CD8-positive, alpha-beta memory T cell (primary cell): ENCODE measurements at regions of chr16 and their contacts with region 1.

Region 1: DNA sequence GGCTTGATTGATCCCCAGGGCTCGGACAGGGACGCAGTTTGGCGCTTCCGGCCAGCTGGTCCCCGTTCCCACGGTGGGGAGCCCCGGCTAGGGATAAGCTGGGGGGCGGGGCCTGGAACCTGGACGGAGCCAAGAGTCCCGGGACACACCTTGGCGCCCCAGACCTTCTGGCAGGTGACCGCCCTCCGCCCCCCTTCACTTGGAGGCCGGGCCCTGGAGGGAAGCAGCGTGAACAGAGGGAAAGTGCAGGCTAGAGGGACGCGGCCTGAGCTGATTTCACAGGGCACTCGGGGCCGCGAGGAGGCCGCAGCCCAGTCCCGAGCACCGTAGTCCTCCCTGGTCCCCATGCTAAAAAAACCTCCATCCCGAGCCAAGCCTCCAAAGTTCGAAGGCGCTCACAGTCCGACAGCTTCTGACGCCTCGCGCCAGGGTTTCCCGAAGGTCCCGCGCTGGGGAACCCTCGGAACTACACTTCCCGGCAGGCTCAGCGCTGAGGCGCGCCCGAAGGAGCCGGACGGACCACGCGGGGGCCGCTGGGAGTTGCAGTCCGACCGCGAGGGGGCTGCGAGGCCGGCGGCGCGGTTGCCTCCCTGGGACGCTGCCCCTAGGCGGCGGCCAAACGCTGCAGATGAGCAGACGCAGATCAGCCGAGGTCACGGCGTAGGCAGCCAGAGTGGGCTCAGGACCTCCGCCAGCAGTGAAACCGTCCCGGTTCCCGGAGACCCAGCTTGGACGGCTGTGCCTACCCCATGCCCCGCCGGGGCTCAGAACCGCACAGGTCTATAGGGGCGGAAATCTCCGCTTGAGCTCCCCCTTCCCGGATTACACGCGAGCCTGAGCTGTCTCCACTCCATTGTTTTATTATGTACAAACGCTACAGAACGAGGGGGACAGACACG is at the start of gene TBX6:
- DNase-seq: peak; percentile 89 to 93 (median 90)
- H3K4me3 ChIP-seq: peak within 1 kb of the TSS; percentile 86
- H3K4me3 Mint-ChIP-seq: peak within 1 kb of the TSS; percentile 82 to 94 (median 90)
- H3K27ac ChIP-seq: peak within 1 kb of the TSS; percentile 90
- H3K27ac Mint-ChIP-seq: peak within 1 kb of the TSS; percentile 82 to 98 (median 97)
- H3K4me1 ChIP-seq: peaks cover 63% of the 10 kb centered on the region
- H3K4me1 Mint-ChIP-seq: peaks cover 38 to 50% (median 41%) of the 10 kb centered on the region in 3 donors
- H3K27me3 ChIP-seq: no peaks in the 10 kb centered on the region
- H3K27me3 Mint-ChIP-seq: no peaks in the 10 kb centered on the region
- total RNA-seq, gene TBX6: 0.71 to 0.83 TPM

Region 2: GRCh38 chr16:30075507-30076275 is 16.0 kb before region 1 on chr16 and contains the start of gene PPP4C:
- CTCF ChIA-PET with region 1: interaction called, 25 read pairs
- POLR2A ChIA-PET with region 1: interaction called, 8 read pairs
- DNase-seq: peak; percentile 90 to 93 (median 91)
- H3K4me3 ChIP-seq: peak within 1 kb of the TSS; percentile 67
- H3K4me3 Mint-ChIP-seq: peak within 1 kb of the TSS; percentile 89 to 97 (median 92)
- H3K27ac ChIP-seq: peak within 1 kb of the TSS; percentile 83
- H3K27ac Mint-ChIP-seq: peak within 1 kb of the TSS; percentile 92 to 98 (median 96)
- H3K4me1 ChIP-seq: peaks cover 32% of the 10 kb centered on the region
- H3K4me1 Mint-ChIP-seq: peaks cover 33 to 52% (median 50%) of the 10 kb centered on the region in 3 donors
- H3K27me3 ChIP-seq: no peaks in the 10 kb centered on the region
- H3K27me3 Mint-ChIP-seq: peaks cover 0 to 1% of the 10 kb centered on the region in 2 donors
- total RNA-seq, gene PPP4C: 137 to 149 TPM

Region 3: DNA sequence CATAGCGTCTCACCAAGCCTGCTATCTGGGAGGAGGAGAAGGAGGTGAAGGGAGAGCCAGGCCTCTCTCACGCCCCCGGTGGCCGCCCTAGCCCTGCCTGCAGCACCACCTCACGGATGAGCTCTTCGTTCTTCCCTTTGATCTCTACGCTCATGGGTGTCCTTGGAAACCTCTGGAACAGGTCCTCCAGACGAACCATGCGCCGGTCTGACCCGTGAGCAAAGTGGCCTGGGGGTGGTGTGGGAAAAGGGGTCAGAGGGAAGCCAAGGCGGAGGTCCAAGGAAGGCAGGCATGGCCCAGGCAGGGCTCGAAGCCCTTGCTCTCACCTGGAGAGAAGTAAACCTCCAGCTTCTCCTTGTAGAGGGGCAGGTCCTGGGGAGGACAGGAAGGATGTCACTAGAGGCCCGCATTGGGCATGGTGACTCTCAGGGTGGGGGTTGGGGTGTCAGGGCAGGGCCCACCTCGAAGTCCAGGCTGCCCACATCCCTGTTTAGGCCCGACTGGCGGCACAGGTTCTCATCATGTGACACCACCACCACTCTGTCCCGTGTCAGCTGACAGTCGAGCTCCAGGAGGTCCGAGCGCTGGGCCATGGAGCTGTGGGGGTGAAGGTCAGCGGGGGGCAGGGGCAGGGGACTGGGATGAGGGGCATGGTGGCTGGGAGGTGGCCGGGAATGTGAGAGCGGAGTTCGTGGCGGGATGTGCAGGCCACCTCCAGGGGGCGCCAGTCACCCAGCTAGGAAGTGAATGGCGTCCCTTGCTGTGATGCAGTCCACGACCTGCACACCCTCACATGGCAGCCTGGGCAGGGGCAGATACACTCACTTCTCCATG is 20.7 kb after region 1 on chr16:
- CTCF ChIA-PET with region 1: interaction called, 22 read pairs
- POLR2A ChIA-PET with region 1: interaction called, 5 read pairs
- DNase-seq: peak in 4 of 5 donors; percentile 25 to 65 (median 36)
- H3K4me3 ChIP-seq: no peak overlapping the region
- H3K4me3 Mint-ChIP-seq: no peak overlapping the region
- H3K27ac ChIP-seq: no peak overlapping the region
- H3K27ac Mint-ChIP-seq: no peak overlapping the region
- H3K4me1 ChIP-seq: peaks cover 19% of the 10 kb centered on the region
- H3K4me1 Mint-ChIP-seq: peaks cover 12 to 21% (median 12%) of the 10 kb centered on the region in 3 donors
- H3K27me3 ChIP-seq: no peaks in the 10 kb centered on the region
- H3K27me3 Mint-ChIP-seq: no peaks in the 10 kb centered on the region

Region 4: DNA sequence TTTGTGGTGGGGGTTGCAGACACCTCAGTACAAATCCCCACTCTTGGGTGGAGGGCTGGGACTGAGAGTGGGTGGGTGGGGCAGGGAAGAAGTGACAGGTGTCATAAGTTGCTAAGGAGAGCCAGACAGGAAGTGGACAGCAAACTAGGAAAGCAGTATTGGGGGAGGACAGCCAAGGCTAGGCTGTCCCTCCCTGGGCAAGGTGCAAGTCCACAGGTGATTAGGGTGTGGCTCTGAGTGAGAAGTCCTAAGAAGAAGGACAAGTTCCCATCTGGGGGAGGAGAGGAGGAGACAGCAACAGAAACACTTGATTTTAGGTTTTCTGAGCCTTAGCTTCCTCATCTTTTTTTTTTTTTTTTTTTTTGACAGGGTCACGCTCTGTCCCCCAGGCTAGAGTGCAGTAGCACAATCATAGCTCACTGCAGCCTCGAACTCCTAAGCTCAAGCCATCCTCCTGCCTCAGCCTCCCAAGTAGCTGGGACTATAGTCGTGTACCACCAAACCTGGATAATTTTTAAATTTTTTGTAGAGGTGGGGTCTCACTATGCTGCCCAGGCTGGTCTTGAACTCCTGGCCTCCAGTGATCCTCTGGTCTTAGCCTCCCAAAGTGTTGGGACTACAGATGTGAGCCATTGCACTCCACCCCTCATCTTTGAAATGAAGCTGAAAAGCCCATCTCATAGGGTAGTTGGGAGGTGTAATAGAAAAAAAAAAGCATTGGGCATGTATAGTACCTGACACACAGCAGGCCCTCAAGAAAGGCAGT is 28.8 kb after region 1 on chr16:
- CTCF ChIA-PET with region 1: interaction called, 10 read pairs
- POLR2A ChIA-PET with region 1: interaction called, 4 read pairs
- DNase-seq: no peak
- H3K4me3 ChIP-seq: no peak overlapping the region
- H3K4me3 Mint-ChIP-seq: peak overlapping the region in 4 of 7 donors; percentile 57 to 85 (median 64)
- H3K27ac ChIP-seq: no peak overlapping the region
- H3K27ac Mint-ChIP-seq: peak overlapping the region in 7 of 8 donors; percentile 42 to 92 (median 77)
- H3K4me1 ChIP-seq: peaks cover 15% of the 10 kb centered on the region
- H3K4me1 Mint-ChIP-seq: peaks cover 20 to 36% (median 24%) of the 10 kb centered on the region in 3 donors
- H3K27me3 ChIP-seq: no peaks in the 10 kb centered on the region
- H3K27me3 Mint-ChIP-seq: no peaks in the 10 kb centered on the region

Region 5: DNA sequence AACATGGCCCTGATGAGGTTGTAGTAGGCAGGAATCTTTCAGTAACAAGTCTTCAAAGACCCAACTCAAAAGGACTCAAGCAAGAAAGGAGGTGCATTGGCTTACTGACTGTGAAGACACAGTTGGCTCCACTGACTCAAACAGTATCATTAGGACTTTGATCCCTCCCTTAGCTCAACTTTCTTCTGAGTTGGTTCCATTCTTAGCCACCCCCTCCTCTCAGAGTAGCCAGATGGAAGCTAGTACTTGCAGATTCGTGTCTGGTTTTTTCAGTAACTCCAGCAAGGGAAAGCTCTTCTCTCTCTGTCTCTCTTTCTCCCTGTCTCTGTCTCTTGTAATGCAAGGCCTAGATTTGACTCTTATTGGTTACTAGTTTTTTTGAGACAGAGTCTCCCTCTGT is 36.3 kb after region 1 on chr16:
- CTCF ChIA-PET with region 1: interaction called, 23 read pairs
- POLR2A ChIA-PET with region 1: interaction called, 4 read pairs
- DNase-seq: no peak
- H3K4me3 ChIP-seq: no peak overlapping the region
- H3K4me3 Mint-ChIP-seq: no peak overlapping the region
- H3K27ac ChIP-seq: no peak overlapping the region
- H3K27ac Mint-ChIP-seq: no peak overlapping the region
- H3K4me1 ChIP-seq: peaks cover 4% of the 10 kb centered on the region
- H3K4me1 Mint-ChIP-seq: peaks cover 5 to 8% (median 7%) of the 10 kb centered on the region in 3 donors
- H3K27me3 ChIP-seq: no peaks in the 10 kb centered on the region
- H3K27me3 Mint-ChIP-seq: no peaks in the 10 kb centered on the region

Region 6: DNA sequence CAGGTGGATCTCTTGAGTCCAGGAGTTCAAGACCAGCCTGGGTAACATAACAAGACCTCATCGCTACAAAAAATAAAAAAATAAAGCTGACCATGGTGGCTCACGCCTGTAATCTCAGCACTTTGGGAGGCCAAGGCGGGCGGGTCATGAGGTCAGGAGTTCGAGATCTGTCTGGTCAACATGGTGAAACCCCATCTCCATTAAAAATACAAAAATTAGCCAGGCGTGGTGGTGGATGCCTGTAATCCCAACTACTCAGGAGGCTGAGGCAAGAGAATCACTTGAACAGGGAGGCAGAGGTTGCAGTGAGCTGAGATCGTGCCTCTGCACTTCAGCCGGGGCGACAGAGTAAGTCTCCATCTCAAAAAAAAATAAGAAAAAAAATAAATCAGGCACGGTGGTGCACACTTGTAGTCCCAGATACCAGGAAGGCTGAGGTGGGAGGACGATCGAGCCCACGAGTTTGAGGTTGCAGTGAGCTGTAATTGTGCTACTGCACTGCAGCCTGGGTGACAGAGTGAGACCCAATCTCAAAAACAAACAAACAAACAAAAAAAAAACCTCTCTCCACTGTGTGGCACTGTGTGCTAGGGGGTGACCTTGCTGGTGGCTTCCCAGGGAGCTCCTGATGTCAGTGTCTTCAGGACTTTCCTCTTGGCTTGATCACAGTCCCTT is 51.1 kb after region 1 on chr16:
- CTCF ChIA-PET with region 1: interaction called, 19 read pairs
- POLR2A ChIA-PET with region 1: interaction called, 3 read pairs
- DNase-seq: peak in 3 of 5 donors; percentile 38 to 54 (median 45)
- H3K4me3 ChIP-seq: no peak overlapping the region
- H3K4me3 Mint-ChIP-seq: no peak overlapping the region
- H3K27ac ChIP-seq: no peak overlapping the region
- H3K27ac Mint-ChIP-seq: peak overlapping the region; percentile 8 to 77 (median 35)
- H3K4me1 ChIP-seq: peaks cover 20% of the 10 kb centered on the region
- H3K4me1 Mint-ChIP-seq: peaks cover 15 to 21% (median 19%) of the 10 kb centered on the region in 3 donors
- H3K27me3 ChIP-seq: no peaks in the 10 kb centered on the region
- H3K27me3 Mint-ChIP-seq: no peaks in the 10 kb centered on the region

Region 7: GRCh38 chr16:30183233-30184095 is 91.7 kb after region 1 on chr16 and contains the start of gene CORO1A:
- CTCF ChIA-PET with region 1: interaction called, 34 read pairs
- POLR2A ChIA-PET with region 1: interaction called, 86 read pairs
- DNase-seq: peak; percentile 75 to 88 (median 80)
- H3K4me3 ChIP-seq: peak within 1 kb of the TSS; percentile 99
- H3K4me3 Mint-ChIP-seq: peak within 1 kb of the TSS; percentile 94 to 100 (median 98)
- H3K27ac ChIP-seq: peak within 1 kb of the TSS; percentile 71
- H3K27ac Mint-ChIP-seq: peak within 1 kb of the TSS; percentile 92 to 100 (median 96)
- H3K4me1 ChIP-seq: peaks cover 33% of the 10 kb centered on the region
- H3K4me1 Mint-ChIP-seq: peaks cover 25 to 43% (median 34%) of the 10 kb centered on the region in 3 donors
- H3K27me3 ChIP-seq: no peaks in the 10 kb centered on the region
- H3K27me3 Mint-ChIP-seq: peaks cover 0 to 14% of the 10 kb centered on the region in 2 donors
- total RNA-seq, gene CORO1A: 889 to 952 TPM